Ascending aorta (tissue), 2 donors: ENCODE measurements at regions of chr15 and their contacts with region 1.

Region 1: GRCh38 chr15:44728576-44729407 is 7.5 kb upstream of the TRIM69 start:
- DNase-seq: peak; percentile 95 to 99
- H3K4me3 ChIP-seq: peak overlapping the region; percentile 72 to 77
- H3K27ac ChIP-seq: peak overlapping the region; percentile 88 to 96
- H3K4me1 ChIP-seq: peaks cover 0 to 21% of the 10 kb centered on the region in 2 donors
- H3K27me3 ChIP-seq: no peaks in the 10 kb centered on the region
- CTCF ChIP-seq: no peak

Region 2: GRCh38 chr15:44426975-44427755 is 301.6 kb before region 1 on chr15 and contains the start of gene CTDSPL2:
- intact Hi-C with region 1: loop called (anchors 5 kb)
- DNase-seq: peak; percentile 92 to 99
- H3K4me3 ChIP-seq: peak within 1 kb of the TSS; percentile 81 to 84
- H3K27ac ChIP-seq: peak within 1 kb of the TSS; percentile 97
- H3K4me1 ChIP-seq: peaks cover 0 to 11% of the 10 kb centered on the region in 2 donors
- H3K27me3 ChIP-seq: no peaks in the 10 kb centered on the region
- CTCF ChIP-seq: peak in 1 of 3 experiments; percentile 44
- total RNA-seq, gene CTDSPL2: 2.6 TPM

Region 3: GRCh38 chr15:44536962-44537734 is 191.6 kb before region 1 on chr15 and contains the start of gene EIF3J:
- intact Hi-C with region 1: loop called (anchors 5 kb)
- DNase-seq: peak; percentile 84 to 97
- H3K4me3 ChIP-seq: peak within 1 kb of the TSS; percentile 75 to 88
- H3K27ac ChIP-seq: peak within 1 kb of the TSS; percentile 96 to 98
- H3K4me1 ChIP-seq: peaks cover 8 to 33% of the 10 kb centered on the region in 2 donors
- H3K27me3 ChIP-seq: no peaks in the 10 kb centered on the region
- CTCF ChIP-seq: no peak
- total RNA-seq, gene EIF3J: 22.8 TPM

Region 4: DNA sequence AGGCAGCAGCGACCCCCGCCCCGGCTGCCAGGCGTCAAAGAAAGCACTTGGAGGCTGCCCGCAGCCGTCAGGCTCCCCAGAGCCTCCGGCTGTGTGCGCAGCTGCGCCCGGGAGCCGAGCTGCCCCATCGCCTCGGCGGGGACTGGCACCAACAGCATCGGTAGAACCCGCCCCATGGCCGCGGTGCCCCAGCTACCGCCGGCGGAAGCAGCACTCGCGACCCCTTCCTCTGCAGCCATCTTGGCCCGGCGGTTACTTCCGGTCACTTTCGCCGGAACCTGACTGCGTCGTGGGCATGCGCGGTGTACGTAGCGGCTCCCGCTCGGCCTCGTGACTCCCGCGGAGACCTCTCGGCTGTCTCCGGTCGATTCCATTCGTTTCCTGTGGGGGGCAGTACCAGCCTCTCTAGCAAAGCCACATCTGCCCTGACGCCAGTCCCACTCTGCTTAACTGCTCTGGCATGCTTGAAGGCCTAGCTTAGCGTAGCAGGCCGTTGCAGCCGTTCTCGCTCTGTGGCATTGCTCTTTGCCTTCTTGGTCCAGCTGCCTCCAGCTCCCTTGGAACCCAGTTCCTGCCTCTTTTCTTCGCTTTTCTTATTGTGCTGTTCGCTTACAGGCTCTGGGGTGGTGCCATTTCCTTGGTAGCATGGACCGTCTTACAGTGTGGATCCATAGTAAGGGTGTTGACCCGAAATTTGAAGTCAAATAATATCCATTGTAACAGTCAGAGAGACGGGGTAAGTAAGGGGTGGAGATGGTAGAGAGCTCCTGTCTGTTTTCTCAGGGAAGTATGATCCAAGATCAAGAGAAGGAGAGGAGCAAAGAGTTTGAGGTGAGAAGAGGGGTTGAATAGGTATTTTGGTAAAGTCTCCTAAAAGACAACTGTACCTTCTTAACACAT is 65.1 kb before region 1 on chr15 and contains the start of gene SPG11:
- intact Hi-C with region 1: loop called (anchors 2 kb)
- DNase-seq: peak; percentile 93 to 99
- H3K4me3 ChIP-seq: peak within 1 kb of the TSS; percentile 77 to 95
- H3K27ac ChIP-seq: peak within 1 kb of the TSS; percentile 96 to 98
- H3K4me1 ChIP-seq: peaks cover 0 to 17% of the 10 kb centered on the region in 2 donors
- H3K27me3 ChIP-seq: no peaks in the 10 kb centered on the region
- CTCF ChIP-seq: peak; percentile 90 to 97 (median 95)
- total RNA-seq, gene SPG11: 21.1 TPM

Region 5: DNA sequence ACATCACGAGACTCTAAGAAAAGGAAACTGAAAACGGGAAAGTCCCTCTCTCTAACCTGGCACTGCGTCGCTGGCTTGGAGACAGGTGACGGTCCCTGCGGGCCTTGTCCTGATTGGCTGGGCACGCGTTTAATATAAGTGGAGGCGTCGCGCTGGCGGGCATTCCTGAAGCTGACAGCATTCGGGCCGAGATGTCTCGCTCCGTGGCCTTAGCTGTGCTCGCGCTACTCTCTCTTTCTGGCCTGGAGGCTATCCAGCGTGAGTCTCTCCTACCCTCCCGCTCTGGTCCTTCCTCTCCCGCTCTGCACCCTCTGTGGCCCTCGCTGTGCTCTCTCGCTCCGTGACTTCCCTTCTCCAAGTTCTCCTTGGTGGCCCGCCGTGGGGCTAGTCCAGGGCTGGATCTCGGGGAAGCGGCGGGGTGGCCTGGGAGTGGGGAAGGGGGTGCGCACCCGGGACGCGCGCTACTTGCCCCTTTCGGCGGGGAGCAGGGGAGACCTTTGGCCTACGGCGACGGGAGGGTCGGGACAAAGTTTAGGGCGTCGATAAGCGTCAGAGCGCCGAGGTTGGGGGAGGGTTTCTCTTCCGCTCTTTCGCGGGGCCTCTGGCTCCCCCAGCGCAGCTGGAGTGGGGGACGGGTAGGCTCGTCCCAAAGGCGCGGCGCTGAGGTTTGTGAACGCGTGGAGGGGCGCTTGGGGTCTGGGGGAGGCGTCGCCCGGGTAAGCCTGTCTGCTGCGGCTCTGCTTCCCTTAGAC is 17.3 kb before region 1 on chr15 and contains the start of gene B2M:
- intact Hi-C with region 1: loop called (anchors 1 kb)
- DNase-seq: peak; percentile 90 to 98
- H3K4me3 ChIP-seq: peak within 1 kb of the TSS; percentile 87 to 90
- H3K27ac ChIP-seq: peak within 1 kb of the TSS; percentile 97 to 99
- H3K4me1 ChIP-seq: peaks cover 4 to 15% of the 10 kb centered on the region in 2 donors
- H3K27me3 ChIP-seq: no peaks in the 10 kb centered on the region
- CTCF ChIP-seq: no peak
- total RNA-seq, gene B2M: 3,395 TPM

Region 6: DNA sequence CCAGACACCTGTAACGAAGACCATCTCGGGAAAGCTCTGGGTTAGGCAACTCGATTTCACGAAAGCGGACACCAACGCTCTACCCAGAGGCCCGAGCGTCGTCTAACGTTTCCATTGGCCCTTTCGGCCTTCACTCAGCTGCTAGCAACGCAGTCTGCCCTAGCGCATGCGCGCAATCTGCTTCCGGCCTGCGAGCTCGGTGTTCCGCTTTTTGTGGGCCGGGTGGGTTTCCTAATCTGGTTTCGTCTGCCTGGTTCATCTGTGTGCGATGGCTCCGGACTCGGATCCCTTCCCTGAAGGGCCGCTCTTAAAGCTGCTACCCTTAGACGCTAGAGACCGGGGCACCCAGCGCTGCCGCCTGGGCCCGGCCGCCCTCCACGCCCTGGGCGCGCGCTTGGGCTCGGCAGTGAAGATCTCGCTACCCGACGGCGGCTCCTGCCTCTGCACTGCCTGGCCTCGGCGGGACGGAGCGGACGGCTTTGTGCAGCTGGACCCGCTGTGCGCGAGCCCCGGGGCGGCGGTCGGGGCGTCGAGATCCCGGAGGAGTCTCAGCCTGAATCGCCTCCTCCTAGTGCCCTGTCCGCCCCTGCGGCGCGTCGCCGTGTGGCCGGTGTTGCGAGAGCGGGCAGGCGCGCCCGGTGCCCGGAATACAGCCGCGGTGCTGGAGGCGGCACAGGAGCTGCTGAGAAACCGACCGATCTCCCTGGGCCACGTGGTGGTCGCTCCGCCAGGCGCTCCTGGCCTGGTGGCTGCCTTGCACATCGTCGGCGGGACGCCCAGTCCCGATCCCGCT is 673.6 kb after region 1 on chr15:
- intact Hi-C with region 1: loop called (anchors 5 kb)
- DNase-seq: peak; percentile 80 to 97
- H3K4me3 ChIP-seq: peak overlapping the region; percentile 92 to 94
- H3K27ac ChIP-seq: peak overlapping the region; percentile 85 to 92
- H3K4me1 ChIP-seq: peaks cover 3 to 18% of the 10 kb centered on the region in 2 donors
- H3K27me3 ChIP-seq: no peaks in the 10 kb centered on the region
- CTCF ChIP-seq: peak in 1 of 3 experiments; percentile 14

Region 7: DNA sequence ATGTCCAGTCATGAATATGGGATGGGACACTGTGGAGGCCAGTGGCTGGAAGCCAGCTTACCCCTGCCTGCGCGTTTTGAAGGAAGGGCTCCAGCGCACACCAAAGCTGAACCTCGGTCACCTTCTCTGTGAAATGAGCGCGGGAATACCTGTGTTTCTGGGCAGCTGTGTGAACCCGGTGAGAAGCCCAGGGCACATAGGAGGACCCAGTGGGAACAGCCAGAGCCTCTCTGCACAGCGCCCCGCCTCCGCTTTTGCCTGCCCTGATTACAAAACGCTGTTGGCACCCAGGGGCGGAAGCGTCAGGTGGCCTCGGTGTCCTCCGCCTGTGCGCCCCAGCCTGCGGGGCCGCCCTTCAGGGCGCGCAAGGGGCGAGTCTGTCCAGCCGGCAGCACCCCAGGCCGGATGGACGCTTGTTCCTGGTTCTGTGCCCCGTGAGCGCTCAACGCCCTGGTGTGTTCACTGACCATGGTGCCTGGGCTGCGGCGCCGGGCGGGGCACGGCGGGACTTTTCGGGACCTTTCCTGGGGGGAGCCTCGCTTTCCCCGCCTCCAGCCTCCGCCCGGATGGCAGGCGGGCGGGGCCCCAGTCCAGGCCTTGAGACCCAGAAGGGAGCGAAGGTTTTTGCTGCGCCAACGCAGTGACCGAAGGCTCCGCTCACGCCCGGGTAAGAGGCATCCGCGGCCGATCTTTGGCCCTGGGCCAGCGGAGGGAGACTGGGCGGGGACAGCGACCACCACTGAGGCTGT is 905.8 kb after region 1 on chr15 and contains the start of gene SQOR:
- intact Hi-C with region 1: loop called (anchors 10 kb)
- DNase-seq: peak; percentile 65 to 93
- H3K4me3 ChIP-seq: peak within 1 kb of the TSS; percentile 77 to 83
- H3K27ac ChIP-seq: peak within 1 kb of the TSS; percentile 91 to 93
- H3K4me1 ChIP-seq: peaks cover 16 to 31% of the 10 kb centered on the region in 2 donors
- H3K27me3 ChIP-seq: no peaks in the 10 kb centered on the region
- CTCF ChIP-seq: no peak
- total RNA-seq, gene SQOR: 61.4 TPM